Posterior vena cava (tissue), 2 donors: ENCODE measurements at regions of chr4 and their contacts with region 1.

Region 1: GRCh38 chr4:189597341-189597740 is 343.3 kb upstream of the FRG1 start:
- DNase-seq: no peak

Region 2: GRCh38 chr4:187656959-187657358 is 1940.4 kb before region 1 on chr4:
- intact Hi-C with region 1: loop called in 1 of 2 experiments (anchors 10 kb)
- DNase-seq: no peak

Region 3: DNA sequence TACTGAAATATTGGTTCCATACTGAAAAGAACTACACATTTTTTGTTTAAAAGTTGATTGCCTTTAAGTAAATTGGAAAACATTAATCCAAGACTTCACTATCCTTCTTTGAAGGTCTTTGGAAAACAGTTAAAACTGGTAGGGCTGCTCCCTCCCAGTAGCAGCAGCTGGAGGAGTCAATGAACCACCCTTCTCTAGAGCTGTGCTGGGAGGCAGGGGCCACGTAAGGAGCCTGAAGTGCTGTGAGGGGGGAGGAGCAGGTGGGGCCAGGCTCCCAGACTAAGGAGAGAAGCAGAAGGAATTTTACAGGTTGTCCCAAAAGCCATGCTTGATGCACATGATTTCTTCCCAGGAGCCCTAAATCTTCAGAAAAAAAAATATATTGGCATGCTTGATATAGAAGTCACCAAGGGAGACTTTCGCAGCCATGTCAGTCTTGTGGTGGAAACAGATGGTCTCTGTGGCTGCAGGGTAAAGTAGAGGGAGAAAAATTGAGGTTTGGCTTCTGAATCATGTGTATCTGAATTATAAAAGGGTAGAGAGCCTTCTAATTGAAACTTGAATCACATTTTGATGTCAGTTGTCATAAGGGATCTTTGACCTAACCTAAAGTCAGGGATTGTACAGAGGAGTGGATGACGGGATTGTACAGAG is 329.9 kb before region 1 on chr4:
- intact Hi-C with region 1: no loop called
- DNase-seq: no peak

Region 4: DNA sequence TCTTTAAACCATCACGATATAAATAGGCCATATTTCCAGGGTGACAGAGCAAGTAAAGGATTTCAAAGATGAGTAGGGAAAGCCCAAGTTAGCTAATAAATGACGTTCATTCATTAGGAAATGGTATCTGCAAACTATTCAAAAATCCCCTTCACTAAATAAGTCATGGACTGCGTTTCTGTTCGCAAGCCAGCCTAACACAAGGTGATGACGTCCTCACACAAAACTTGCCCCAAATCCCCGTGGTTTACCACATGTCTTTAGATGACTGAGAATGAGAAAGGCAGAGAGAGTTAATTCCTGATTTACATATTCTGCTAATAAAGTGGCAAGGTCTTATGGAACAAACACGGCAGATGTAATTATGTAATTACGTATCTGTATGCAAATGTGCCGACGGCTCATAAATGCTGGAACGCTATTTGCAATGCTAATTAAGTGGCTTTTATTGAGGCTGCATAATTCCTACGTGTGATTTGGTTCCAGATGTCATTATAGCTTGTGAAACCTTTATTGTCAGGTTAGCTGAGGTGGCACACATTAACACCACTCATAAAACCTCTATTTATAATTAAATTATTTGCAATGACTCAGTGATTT is 94.4 kb before region 1 on chr4:
- intact Hi-C with region 1: no loop called
- DNase-seq: no peak